Psoas muscle (tissue), 8 donors: ENCODE measurements at regions of chr17 and their contacts with region 1.

Region 1: DNA sequence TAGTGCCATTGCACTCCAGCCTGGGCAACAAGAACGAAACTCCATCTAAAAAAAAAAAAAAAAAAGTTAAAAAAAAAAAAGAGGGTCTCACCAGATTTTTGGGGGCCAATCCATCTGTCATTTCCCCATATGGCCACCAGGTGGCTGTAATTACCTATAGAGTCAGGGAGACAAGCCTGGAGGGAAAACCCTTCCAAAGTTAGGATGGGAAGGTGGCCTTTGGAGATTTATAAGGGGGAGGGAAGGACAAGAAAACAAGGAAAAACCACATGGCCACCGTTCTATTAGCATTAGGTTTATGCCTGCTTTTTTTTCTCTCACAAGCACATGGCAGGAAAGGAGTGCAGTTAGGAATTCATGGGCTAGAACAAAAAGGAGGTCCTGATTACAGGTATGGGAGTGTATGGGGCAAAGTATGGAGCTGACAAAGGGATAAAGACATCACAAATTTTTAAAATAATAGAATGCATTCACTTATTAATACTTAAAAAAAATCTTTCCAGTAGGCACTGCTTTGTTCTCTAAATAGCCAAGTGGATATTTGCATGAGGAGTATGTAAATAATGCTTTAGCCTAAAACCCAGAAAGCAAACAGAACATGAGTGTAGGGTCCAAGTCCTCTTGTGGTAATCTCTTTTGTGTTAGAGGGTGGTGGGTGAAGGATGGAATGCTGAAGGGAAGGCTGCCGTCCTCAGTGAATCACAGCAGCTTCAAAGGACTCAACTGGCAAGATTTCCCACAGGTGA is 5.1 kb downstream of the CYB5D1 start:
- DNase-seq: no peak
- ATAC-seq: no peak
- H3K4me3 ChIP-seq: no peak overlapping the region
- H3K27ac ChIP-seq: no peak overlapping the region
- H3K4me1 ChIP-seq: peaks cover 12% of the 10 kb centered on the region
- H3K27me3 ChIP-seq: no peaks in the 10 kb centered on the region
- CTCF ChIP-seq: peak; percentile 82

Region 2: GRCh38 chr17:7897773-7898172 is 34.9 kb after region 1 on chr17:
- intact Hi-C with region 1: loop called (anchors 1 to 5 kb)
- DNase-seq: no peak
- ATAC-seq: peak; percentile 68 to 80 (median 76)
- H3K4me3 ChIP-seq: no peak overlapping the region
- H3K27ac ChIP-seq: no peak overlapping the region
- H3K4me1 ChIP-seq: peaks cover 2% of the 10 kb centered on the region
- H3K27me3 ChIP-seq: no peaks in the 10 kb centered on the region
- CTCF ChIP-seq: peak; percentile 50

Region 3: DNA sequence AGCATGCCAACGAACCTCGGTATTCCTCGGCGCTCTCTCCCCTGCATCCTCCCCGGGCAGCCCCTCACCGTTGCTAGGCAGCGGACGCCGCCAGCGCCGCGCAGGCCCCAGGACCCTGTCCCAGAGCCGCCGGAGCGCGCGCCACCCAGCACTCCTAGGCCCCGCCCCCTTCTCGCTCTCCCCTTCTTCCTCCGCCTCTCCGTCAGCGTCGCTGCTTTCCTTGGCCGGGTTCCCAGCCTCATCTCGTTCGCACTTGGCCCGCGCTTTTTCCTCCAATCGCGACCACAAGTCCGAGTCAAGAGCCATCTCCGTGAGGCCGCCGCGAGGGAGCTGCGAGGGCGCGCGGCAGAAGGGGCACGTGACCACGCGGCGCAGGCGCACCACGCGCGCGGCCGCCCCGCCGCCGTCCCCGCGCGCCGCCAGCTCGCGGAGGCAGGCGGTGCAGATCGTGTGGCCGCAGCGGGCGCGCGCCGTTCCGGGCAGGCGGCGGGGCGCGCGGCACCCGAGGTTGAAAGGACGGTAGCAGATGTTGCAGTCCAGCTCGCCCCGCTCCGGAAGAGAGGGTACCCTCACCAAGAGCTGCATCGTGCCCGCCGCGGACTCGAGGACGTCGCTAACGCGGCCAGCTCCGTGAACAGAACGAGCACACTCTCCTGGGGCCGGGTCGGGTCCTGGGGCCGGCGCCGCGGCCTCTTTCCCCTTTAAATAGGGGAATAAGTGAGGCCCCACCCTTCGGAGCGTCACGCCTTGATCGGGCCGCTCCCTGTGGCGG is 52.9 kb after region 1 on chr17 and contains the start of gene RNF227:
- intact Hi-C with region 1: loop called in 1 of 2 experiments (anchors 5 kb)
- DNase-seq: peak; percentile 88 to 95
- ATAC-seq: peak; percentile 83 to 93 (median 92)
- H3K4me3 ChIP-seq: peak within 1 kb of the TSS; percentile 87
- H3K27ac ChIP-seq: peak within 1 kb of the TSS; percentile 85
- H3K4me1 ChIP-seq: peaks cover 21% of the 10 kb centered on the region
- H3K27me3 ChIP-seq: no peaks in the 10 kb centered on the region
- CTCF ChIP-seq: no peak
- total RNA-seq, gene RNF227: 0.62 to 2.6 (median 1.0) TPM